Activated naive CD4-positive, alpha-beta T cell treated with anti-CD3 and anti-CD28 coated beads for 36 hours (primary cell): ENCODE measurements at regions of chr14 and their contacts with region 1.

Region 1: DNA sequence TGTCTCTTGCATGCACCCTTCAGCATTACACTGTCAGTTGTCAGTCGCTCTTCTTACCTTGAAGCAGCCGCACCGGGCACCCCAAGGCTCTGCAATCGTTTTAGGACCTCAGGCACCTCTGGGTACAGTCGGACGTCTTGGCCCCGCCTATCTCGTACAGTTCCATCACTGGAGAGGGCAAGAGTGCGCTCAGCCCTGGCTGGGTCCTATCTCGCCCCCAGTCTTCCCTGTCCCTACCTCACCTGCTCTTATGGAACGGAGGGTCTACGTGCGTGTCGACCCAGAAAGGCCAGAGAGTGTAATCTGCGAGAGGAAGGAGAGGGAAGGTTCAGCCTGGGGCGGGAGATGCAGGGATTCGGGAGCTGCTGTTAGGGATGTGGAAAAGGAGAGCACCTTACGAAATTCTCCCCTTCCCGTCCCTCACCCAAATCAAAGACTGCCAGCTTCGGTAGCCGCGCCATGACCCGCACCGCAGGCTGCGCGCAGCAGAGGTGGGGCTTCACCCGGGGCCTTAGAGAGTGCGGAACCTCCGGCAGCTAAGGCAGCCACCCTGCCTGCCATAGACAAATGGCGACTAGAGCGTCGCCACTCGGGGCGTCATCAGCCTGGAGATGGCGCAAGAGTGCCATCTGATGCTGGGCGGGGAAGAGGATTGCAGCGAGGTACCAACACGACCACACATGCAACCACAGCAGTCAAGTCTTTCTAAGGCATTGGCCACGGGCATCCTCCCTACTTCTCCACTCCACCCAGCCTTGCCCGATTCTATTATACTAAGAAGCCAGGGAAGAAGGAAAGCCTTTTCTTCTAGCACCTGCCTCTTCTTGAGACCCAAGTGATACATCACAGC is at the start of gene MDP1:
- DNase-seq: peak; percentile 93
- H3K4me3 Mint-ChIP-seq: peak within 1 kb of the TSS; percentile 86
- H3K27ac Mint-ChIP-seq: peak within 1 kb of the TSS; percentile 96
- H3K4me1 Mint-ChIP-seq: peaks cover 45% of the 10 kb centered on the region
- H3K27me3 Mint-ChIP-seq: no peaks in the 10 kb centered on the region
- total RNA-seq, gene MDP1: 10.2 to 13.6 TPM

Region 2: DNA sequence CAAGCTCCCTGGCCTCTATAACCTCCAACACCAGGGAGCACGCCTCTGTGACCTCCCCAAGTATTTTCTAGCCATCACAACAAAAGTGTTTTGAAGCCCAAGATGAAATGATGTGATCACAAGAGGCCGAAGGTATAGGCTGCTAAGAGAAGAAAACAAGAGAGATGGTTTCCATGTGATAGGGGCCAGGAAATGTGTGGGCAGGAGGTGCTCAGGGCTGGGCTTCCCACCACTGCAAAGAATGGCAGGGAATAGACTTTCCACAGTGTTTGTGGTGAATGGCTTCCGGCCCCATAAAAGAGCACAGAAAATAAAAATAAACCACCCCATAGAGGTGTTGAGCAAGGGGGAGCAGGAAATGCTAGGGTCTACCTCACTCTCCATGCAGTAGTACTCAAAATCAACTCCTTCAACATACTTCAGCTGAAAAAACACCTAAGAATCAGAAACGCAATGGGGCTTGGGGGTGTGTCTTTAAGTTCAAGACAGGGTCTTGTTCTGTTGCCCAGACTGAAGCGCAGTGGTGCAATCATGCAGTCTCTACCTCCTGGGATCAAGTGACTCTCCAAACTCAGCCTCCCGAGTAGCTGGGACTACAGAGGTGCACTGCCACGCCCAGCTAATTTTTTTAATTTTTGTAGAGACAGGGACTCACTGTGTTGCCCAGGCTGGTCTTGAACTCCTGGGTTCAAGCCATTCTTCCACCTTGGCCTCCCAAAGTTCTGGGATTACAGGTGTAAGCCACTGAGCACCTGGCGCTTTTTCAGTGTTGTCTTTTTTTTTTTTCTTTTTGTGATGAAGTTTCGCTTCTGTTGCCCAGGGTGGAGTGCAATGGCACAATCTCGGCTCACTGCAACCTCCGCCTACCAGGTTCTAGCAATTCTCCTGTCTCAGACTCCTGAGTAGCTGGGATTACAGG is 1653.8 kb before region 1 on chr14:
- CTCF ChIA-PET with region 1: no interaction called
- intact Hi-C with region 1: no loop called
- DNase-seq: peak; percentile 81
- H3K4me3 Mint-ChIP-seq: peak overlapping the region; percentile 69
- H3K27ac Mint-ChIP-seq: peak overlapping the region; percentile 97
- H3K4me1 Mint-ChIP-seq: peaks cover 90% of the 10 kb centered on the region
- H3K27me3 Mint-ChIP-seq: no peaks in the 10 kb centered on the region

Region 3: GRCh38 chr14:23708343-23708742 is 507.4 kb before region 1 on chr14:
- CTCF ChIA-PET with region 1: no interaction called
- intact Hi-C with region 1: no loop called
- DNase-seq: no peak
- H3K4me3 Mint-ChIP-seq: no peak overlapping the region
- H3K27ac Mint-ChIP-seq: no peak overlapping the region
- H3K4me1 Mint-ChIP-seq: no peaks in the 10 kb centered on the region
- H3K27me3 Mint-ChIP-seq: peaks cover 4% of the 10 kb centered on the region

Region 4: DNA sequence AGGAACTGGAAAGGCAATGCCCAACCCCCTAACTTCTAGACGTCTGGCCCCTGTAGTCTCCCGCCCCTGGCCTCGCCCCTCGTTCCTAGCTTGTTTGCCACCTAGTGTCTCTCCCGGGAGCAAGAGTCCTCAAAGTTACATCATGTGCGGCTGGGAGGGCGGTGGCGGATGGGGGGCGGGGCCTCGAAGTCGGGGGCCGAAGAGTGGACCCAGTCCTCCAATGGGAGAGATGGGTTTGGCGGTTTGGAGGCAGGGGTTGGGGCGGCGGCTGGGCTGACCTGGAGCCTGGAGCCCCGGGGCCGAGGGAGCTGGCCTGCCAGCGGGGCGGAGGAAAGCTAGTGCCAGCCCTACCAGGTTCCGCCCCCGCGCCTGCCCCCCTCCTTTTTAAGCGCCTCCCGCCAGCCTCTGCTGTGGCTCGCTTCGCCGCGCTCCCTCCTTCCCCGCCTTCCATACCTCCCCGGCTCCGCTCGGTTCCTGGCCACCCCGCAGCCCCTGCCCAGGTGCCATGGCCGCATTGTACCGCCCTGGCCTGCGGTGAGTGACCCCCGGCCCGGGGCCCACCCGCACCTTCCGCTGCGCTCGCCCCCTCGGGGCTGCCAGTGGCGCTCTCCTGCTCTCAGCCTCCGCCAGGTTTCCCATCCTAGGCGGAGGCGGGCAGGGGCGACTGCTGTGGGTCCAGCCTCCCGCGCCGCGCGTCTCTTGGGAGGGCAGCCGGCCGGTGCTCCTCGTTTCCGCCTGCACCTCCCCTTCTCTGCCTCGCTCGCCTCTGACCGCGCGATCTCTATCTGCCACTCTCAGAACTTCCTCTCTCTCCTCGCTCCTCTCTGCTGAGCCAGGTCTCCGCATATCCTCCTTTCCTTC is 121.6 kb before region 1 on chr14 and contains the start of gene PCK2:
- CTCF ChIA-PET with region 1: interaction called, 3 read pairs
- intact Hi-C with region 1: loop called (anchors 1 kb)
- DNase-seq: peak; percentile 94
- H3K4me3 Mint-ChIP-seq: peak within 1 kb of the TSS; percentile 99
- H3K27ac Mint-ChIP-seq: peak within 1 kb of the TSS; percentile 98
- H3K4me1 Mint-ChIP-seq: peaks cover 32% of the 10 kb centered on the region
- H3K27me3 Mint-ChIP-seq: no peaks in the 10 kb centered on the region
- total RNA-seq, gene PCK2: 117 TPM

Region 5: GRCh38 chr14:24146978-24147760 is 68.6 kb before region 1 on chr14 and contains the start of gene RNF31:
- CTCF ChIA-PET with region 1: no interaction called
- intact Hi-C with region 1: loop called (anchors 1 kb)
- DNase-seq: peak; percentile 99
- H3K4me3 Mint-ChIP-seq: peak within 1 kb of the TSS; percentile 97
- H3K27ac Mint-ChIP-seq: peak within 1 kb of the TSS; percentile 99
- H3K4me1 Mint-ChIP-seq: peaks cover 54% of the 10 kb centered on the region
- H3K27me3 Mint-ChIP-seq: no peaks in the 10 kb centered on the region
- total RNA-seq, gene RNF31: 51.1 to 53.8 TPM

Region 6: DNA sequence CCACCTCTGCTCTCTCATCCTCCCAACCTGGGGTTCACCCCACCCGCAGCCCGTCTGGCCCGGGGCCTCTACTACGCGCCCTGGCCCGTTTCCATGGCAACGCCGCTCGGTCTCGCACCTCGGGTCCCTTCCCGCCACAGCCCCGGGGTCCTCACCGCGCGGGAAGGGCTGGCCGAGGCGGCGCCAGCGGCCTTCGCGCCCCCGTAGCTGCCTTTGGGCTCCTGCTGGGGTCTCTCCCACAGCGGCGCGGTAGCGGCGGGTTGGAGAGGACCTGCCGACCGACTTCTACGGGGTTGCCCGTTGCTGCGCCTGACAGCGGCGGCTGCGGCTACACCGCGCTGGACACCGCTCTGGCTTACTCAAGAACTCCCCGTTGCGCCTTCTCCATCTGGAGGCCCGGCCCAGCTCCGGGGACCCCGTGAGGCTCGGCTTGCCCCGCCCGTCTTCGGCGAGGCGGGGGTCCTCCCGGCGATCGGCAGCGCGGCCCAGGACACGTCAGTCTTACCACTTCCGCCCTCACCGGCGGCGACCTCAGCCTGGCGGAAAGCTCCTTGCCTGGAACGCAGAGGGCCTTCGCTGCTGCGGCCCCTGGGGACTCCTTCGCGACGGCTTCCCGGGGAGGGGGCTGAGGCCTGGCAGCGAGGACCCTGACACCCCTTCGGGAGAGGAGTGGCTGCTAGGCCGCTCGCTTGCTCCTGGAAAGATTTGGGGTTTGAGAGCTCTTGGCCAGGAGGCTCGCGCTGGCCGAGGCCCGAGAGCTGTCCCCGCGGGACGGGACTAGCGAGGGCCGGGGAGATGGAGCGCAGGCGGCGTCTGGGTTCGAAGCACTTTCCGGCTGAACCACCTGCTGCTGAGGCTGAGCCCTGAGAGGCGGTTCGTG is 20.3 kb before region 1 on chr14 and contains the start of gene TM9SF1:
- CTCF ChIA-PET with region 1: interaction called, 4 read pairs
- intact Hi-C with region 1: loop called (anchors 1 kb)
- DNase-seq: peak; percentile 89
- H3K4me3 Mint-ChIP-seq: peak within 1 kb of the TSS; percentile 96
- H3K27ac Mint-ChIP-seq: peak within 1 kb of the TSS; percentile 93
- H3K4me1 Mint-ChIP-seq: peaks cover 56% of the 10 kb centered on the region
- H3K27me3 Mint-ChIP-seq: no peaks in the 10 kb centered on the region
- total RNA-seq, gene TM9SF1: 14.7 to 15.1 TPM

Region 7: DNA sequence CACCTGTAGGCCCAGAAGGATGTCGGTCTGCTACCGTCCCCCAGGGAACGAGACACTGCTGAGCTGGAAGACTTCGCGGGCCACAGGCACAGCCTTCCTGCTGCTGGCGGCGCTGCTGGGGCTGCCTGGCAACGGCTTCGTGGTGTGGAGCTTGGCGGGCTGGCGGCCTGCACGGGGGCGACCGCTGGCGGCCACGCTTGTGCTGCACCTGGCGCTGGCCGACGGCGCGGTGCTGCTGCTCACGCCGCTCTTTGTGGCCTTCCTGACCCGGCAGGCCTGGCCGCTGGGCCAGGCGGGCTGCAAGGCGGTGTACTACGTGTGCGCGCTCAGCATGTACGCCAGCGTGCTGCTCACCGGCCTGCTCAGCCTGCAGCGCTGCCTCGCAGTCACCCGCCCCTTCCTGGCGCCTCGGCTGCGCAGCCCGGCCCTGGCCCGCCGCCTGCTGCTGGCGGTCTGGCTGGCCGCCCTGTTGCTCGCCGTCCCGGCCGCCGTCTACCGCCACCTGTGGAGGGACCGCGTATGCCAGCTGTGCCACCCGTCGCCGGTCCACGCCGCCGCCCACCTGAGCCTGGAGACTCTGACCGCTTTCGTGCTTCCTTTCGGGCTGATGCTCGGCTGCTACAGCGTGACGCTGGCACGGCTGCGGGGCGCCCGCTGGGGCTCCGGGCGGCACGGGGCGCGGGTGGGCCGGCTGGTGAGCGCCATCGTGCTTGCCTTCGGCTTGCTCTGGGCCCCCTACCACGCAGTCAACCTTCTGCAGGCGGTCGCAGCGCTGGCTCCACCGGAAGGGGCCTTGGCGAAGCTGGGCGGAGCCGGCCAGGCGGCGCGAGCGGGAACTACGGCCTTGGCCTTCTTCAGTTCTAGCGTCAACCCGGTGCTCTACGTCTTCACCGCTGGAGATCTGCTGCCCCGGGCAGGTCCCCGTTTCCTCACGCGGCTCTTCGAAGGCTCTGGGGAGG is 95.2 kb after region 1 on chr14 and contains the start of gene LTB4R:
- CTCF ChIA-PET with region 1: interaction called, 42 read pairs
- intact Hi-C with region 1: loop called (anchors 1 kb)
- DNase-seq: peak; percentile 71
- H3K4me3 Mint-ChIP-seq: peak within 1 kb of the TSS; percentile 71
- H3K27ac Mint-ChIP-seq: peak within 1 kb of the TSS; percentile 68
- H3K4me1 Mint-ChIP-seq: peaks cover 64% of the 10 kb centered on the region
- H3K27me3 Mint-ChIP-seq: no peaks in the 10 kb centered on the region
- total RNA-seq, gene LTB4R: 10.6 to 11.4 TPM

Region 8: DNA sequence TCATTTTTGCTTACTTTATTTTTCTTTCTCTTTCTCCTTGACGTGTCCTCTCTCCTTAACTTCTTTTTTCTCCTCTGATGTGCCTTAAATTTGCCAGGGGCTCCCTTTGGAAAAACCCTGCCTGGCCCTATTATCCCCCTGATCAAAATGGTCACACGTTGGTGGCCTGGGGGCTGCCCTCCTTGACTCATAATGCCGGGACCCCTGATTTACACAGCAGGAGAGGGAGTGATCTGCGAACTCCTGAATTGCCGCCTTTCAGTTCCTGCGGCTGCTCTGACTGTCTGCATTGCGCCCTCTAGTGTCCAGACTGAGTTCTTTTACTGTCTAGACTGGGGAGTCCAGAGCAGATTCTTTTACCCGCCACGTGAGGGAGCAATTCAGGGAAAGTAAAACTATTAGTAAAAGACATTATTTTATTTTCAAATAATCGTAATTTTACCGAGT is 463.1 kb after region 1 on chr14:
- CTCF ChIA-PET with region 1: no interaction called
- intact Hi-C with region 1: loop called (anchors 10 kb)
- DNase-seq: peak; percentile 89
- H3K4me3 Mint-ChIP-seq: peak overlapping the region; percentile 70
- H3K27ac Mint-ChIP-seq: peak overlapping the region; percentile 88
- H3K4me1 Mint-ChIP-seq: peaks cover 59% of the 10 kb centered on the region
- H3K27me3 Mint-ChIP-seq: no peaks in the 10 kb centered on the region

Region 9: GRCh38 chr14:24774187-24774915 is 558.6 kb after region 1 on chr14:
- CTCF ChIA-PET with region 1: no interaction called
- intact Hi-C with region 1: no loop called
- DNase-seq: no peak
- H3K4me3 Mint-ChIP-seq: no peak overlapping the region
- H3K27ac Mint-ChIP-seq: no peak overlapping the region
- H3K4me1 Mint-ChIP-seq: no peaks in the 10 kb centered on the region
- H3K27me3 Mint-ChIP-seq: peaks cover 23% of the 10 kb centered on the region